PC-3 (cell line): ENCODE measurements at regions of chr19 and their contacts with region 1.

Region 1: DNA sequence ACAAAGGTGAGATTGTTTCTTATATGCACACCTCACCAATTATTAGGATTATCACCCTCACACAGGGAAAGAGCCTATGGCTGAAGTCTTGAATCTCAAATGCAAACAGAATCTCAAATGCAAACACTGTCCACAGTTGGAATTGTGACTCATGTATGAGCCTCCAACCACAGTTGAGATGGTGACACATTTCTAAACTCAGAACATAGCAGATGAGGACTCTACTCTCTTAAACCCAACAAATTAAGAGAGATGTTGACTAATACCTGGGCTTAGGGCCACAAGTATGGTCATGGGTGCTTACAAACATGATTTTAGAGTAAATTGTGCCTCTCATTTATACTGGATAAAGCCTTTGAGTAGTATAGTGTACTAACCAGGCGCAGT is 32.4 kb upstream of the ZNF254 start:
- DNase-seq: peak; percentile 96
- ATAC-seq: peak; percentile 89
- H3K4me3 ChIP-seq: no peak overlapping the region
- H3K27ac ChIP-seq: peak overlapping the region; percentile 94
- H3K4me1 ChIP-seq: peaks cover 26% of the 10 kb centered on the region
- H3K27me3 ChIP-seq: no peaks in the 10 kb centered on the region
- CTCF ChIP-seq: no peak

Region 2: DNA sequence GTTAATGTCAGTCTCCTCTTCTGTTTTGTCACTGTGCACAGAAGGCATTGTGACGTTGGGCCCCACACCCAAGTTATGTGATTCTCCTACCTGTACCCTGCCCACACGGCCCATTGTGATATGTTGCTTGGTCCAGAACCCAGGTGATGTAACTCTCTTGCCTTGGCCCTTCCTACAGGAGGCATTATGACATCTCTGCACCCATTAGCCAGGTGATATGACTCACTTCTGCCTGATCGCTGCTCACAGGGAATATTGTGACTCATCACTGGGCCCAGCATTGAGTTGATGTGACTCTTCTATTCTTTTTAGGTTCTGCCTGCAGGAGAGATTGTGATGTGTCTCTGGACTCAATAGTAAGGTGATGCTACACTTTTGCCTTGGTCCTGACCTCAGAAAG is 593.9 kb before region 1 on chr19:
- CTCF ChIA-PET with region 1: no interaction called
- POLR2A ChIA-PET with region 1: no interaction called
- intact Hi-C with region 1: no loop called
- DNase-seq: peak; percentile 54
- ATAC-seq: peak; percentile 31; the same call in 1 of the 2 replicates
- H3K4me3 ChIP-seq: no peak overlapping the region
- H3K27ac ChIP-seq: no peak overlapping the region
- H3K4me1 ChIP-seq: no peaks in the 10 kb centered on the region
- H3K27me3 ChIP-seq: no peaks in the 10 kb centered on the region
- CTCF ChIP-seq: no peak

Region 3: GRCh38 chr19:23914402-23915301 is 139.9 kb before region 1 on chr19 and contains the start of gene ZNF726:
- CTCF ChIA-PET with region 1: no interaction called
- POLR2A ChIA-PET with region 1: no interaction called
- intact Hi-C with region 1: loop called (anchors 5 kb)
- DNase-seq: peak; percentile 96
- ATAC-seq: peak; percentile 98
- H3K4me3 ChIP-seq: peak within 1 kb of the TSS; percentile 86
- H3K27ac ChIP-seq: peak within 1 kb of the TSS; percentile 44
- H3K4me1 ChIP-seq: no peaks in the 10 kb centered on the region
- H3K27me3 ChIP-seq: no peaks in the 10 kb centered on the region
- CTCF ChIP-seq: no peak
- total RNA-seq, gene ZNF726: 12.7 and 12.8 TPM in 2 replicates

Region 4: DNA sequence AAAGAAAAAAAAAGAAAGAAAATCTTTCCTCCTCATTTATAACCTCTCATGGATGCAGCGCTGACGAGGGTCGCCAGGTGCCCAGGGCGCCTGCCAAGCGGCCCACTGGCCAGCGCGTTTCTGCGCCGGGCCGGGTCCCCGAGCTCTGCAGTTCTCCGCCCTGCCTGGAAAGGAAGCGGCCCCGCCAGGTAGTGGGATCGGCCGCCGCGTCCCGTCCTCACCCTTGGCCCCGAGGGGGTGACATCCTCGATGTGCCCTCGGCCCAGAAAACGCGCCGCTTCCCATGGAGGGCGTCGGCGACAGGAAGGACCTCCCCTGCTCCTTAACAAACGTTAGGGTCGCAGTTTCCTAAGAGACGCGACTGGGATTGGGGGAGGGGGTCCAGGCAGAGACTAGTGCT is 82.9 kb before region 1 on chr19:
- CTCF ChIA-PET with region 1: no interaction called
- POLR2A ChIA-PET with region 1: no interaction called
- intact Hi-C with region 1: no loop called
- DNase-seq: no peak
- ATAC-seq: no peak
- H3K4me3 ChIP-seq: no peak overlapping the region
- H3K27ac ChIP-seq: no peak overlapping the region
- H3K4me1 ChIP-seq: no peaks in the 10 kb centered on the region
- H3K27me3 ChIP-seq: no peaks in the 10 kb centered on the region
- CTCF ChIP-seq: no peak

Region 5: GRCh38 chr19:24033301-24033962 is 21.1 kb before region 1 on chr19:
- CTCF ChIA-PET with region 1: no interaction called
- POLR2A ChIA-PET with region 1: interaction called, 5 read pairs
- intact Hi-C with region 1: loop called (anchors 1 kb)
- DNase-seq: peak; percentile 91
- ATAC-seq: peak; percentile 96
- H3K4me3 ChIP-seq: peak overlapping the region; percentile 88
- H3K27ac ChIP-seq: peak overlapping the region; percentile 90
- H3K4me1 ChIP-seq: no peaks in the 10 kb centered on the region; the same call in 1 of the 2 replicates
- H3K27me3 ChIP-seq: no peaks in the 10 kb centered on the region
- CTCF ChIP-seq: 0 out of 2 replicates have a peak, but pooled peaks have one; percentile 17

Region 6: GRCh38 chr19:24086974-24087595 is 32.5 kb after region 1 on chr19 and contains the start of gene ZNF254:
- CTCF ChIA-PET with region 1: no interaction called
- POLR2A ChIA-PET with region 1: no interaction called
- intact Hi-C with region 1: loop called (anchors 1 kb)
- DNase-seq: peak; percentile 94
- ATAC-seq: peak; percentile 99
- H3K4me3 ChIP-seq: peak within 1 kb of the TSS; percentile 90
- H3K27ac ChIP-seq: peak within 1 kb of the TSS; percentile 63
- H3K4me1 ChIP-seq: no peaks in the 10 kb centered on the region
- H3K27me3 ChIP-seq: no peaks in the 10 kb centered on the region
- CTCF ChIP-seq: no peak
- total RNA-seq, gene ZNF254: 8.1 and 9.3 TPM in 2 replicates

Region 7: DNA sequence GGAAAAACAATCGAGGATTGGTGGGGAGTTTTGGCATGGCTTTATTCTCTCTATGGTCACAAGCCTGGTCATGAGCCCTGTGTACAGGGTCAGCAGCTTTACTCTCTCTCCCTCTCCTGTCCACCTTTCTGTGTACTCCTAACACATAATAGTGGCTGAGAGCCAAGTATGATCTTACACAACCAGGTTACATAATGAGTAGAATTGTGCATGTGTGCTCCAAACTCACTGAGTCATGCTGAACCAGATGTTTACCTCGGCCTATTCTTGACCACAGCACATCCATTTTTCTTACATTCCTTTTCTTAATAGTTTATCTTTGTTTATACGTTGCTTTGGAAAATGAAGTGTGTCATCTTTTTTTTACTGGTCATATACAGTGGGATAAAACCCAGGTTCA is 85.6 kb after region 1 on chr19:
- CTCF ChIA-PET with region 1: no interaction called
- POLR2A ChIA-PET with region 1: no interaction called
- intact Hi-C with region 1: loop called (anchors 1 kb)
- DNase-seq: peak; percentile 89
- ATAC-seq: peak; percentile 88
- H3K4me3 ChIP-seq: no peak overlapping the region
- H3K27ac ChIP-seq: peak overlapping the region; percentile 55
- H3K4me1 ChIP-seq: no peaks in the 10 kb centered on the region
- H3K27me3 ChIP-seq: no peaks in the 10 kb centered on the region
- CTCF ChIP-seq: no peak

Region 8: DNA sequence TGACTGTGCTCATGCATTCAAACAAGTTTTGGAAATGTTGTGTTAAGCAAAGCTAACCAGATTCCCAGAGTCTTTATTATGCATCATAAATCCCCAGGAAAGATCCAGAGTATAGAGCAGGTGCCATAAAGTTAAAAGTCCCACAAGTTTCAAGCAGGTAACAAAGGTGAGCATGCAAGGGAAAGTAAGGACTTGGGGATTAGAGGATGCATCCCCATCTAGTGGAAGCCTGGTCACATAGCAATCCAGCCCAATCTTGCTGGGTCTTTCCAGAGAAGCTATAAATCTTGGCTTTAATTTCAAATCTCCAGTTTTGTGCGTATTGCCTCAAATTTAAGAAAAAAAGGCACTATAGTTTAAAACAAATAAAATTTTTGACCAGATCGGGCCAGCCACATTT is 105.2 kb after region 1 on chr19:
- CTCF ChIA-PET with region 1: no interaction called
- POLR2A ChIA-PET with region 1: no interaction called
- intact Hi-C with region 1: no loop called
- DNase-seq: peak; percentile 49
- ATAC-seq: no peak; the same call in 1 of the 2 replicates
- H3K4me3 ChIP-seq: no peak overlapping the region
- H3K27ac ChIP-seq: no peak overlapping the region
- H3K4me1 ChIP-seq: no peaks in the 10 kb centered on the region
- H3K27me3 ChIP-seq: no peaks in the 10 kb centered on the region
- CTCF ChIP-seq: peak; percentile 66